ENCODE measurements at regions of chr5 and their contacts with region 1.

Region 1: DNA sequence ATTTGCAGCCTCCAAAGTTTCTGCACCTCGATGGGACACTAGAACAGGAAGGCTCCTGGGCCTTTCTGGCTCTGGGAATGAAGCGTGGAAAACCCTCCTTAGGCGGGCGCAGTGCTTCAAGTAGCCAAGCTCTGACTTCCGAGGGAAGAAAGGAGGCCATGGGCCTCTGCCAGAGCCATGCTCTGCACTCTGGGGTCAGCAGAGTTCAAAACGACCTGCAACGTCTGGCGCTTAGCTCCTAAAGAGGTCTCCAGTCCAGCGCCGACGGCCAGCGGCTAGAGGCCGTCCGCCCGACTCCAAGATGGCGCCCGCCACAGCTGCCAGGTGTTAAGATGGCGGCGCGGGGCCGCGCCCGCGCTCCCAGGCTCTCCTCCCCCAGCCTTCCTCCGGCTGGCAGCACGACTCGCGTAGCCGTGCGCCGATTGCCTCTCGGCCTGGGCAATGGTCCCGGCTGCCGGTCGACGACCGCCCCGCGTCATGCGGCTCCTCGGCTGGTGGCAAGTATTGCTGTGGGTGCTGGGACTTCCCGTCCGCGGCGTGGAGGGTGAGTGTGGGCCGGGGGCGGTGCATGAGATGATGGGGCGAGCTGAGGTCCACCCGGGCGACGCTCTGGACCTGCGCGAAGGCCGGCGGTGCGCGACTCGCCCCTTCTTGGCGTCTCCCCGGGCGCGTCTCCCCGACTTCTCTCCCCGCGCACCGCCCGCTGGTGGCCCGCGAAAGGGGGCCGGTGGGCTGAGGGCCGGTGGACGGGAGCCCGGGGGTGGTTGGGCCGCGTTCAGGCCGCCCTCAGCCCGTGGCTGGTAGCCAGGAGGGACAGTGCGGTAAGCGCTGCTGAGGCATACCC is at the start of gene TXNDC15:
- DNase-seq: peak; percentile 73 to 93 (median 82)
- H3K4me3 ChIP-seq: peak within 1 kb of the TSS; percentile 58 to 98 (median 92)
- H3K27ac ChIP-seq: peak within 1 kb of the TSS; percentile 87 to 100 (median 99)
- H3K27me3 ChIP-seq: no peaks in the 10 kb centered on the region
- CTCF ChIP-seq: peak in 31 of 56 donors; percentile 8 to 52 (median 27)
- total RNA-seq, gene TXNDC15: 37.3 to 84.2 (median 60.4) TPM

Region 2: GRCh38 chr5:134758504-134759341 is 115.5 kb before region 1 on chr5 and contains the start of gene DDX46:
- intact Hi-C with region 1: loop called in 1 of 2 experiments (anchors 10 kb)
- DNase-seq: peak; percentile 81 to 96 (median 91)
- H3K4me3 ChIP-seq: peak within 1 kb of the TSS; percentile 68 to 99 (median 90)
- H3K27ac ChIP-seq: peak within 1 kb of the TSS in 51 of 59 donors; percentile 10 to 86 (median 70)
- H3K27me3 ChIP-seq: no peaks in the 10 kb centered on the region
- CTCF ChIP-seq: peak; percentile 77 to 97 (median 89)
- total RNA-seq, gene DDX46: 39.7 to 84.6 (median 56.9) TPM

Region 3: DNA sequence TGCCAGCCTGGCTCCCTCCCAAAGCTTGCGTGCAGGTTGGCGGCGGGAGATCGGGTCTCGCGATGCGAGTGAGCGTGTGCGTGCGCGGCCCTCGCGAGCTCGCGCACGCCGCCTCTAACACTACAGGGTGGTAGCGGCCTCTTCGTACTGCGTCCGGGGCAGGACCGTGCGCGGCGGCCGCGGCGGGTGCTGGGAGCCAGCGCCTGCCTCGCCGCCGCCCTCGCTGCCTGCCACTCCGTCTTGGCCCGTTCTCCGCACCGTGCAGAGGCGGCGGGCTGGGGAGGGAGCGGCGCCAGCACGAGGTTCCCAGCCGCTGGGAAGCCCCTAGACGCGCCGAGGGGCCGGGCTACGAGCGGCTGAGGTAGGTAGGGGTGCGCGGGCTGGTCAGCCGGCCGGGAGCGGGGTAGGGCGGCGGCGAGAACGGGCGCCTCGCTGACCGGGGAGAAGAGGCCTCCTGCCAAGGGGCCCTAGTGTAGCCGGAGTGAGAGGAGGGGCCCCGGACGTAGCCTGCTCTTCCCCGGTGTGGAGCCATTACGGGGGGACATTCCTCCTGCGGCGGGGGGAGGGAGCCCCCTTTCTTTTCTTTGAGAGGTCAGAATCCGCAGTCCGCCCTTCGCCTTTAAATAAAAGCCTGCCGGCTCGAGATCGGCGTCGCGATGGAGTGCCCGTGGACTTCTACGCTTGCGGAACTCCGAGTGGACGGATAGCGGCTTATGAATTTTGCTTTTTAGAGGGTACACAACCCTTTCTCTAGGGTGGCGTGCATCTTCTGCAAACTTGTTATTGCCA is 28.2 kb before region 1 on chr5 and contains the start of gene C5orf24:
- intact Hi-C with region 1: loop called (anchors 1 to 2 kb)
- DNase-seq: peak; percentile 89 to 96 (median 94)
- H3K4me3 ChIP-seq: peak within 1 kb of the TSS; percentile 61 to 99 (median 92)
- H3K27ac ChIP-seq: peak within 1 kb of the TSS; percentile 74 to 98 (median 95)
- H3K27me3 ChIP-seq: no peaks in the 10 kb centered on the region
- CTCF ChIP-seq: peak in 38 of 56 donors; percentile 11 to 64 (median 33)
- total RNA-seq, gene C5orf24: 38.2 to 79.3 (median 56.7) TPM

Measured in dorsolateral prefrontal cortex (tissue), 120 donors.